Gastrocnemius medialis (tissue), 4 donors: ENCODE measurements at regions of chr1 and their contacts with region 1.

Region 1: GRCh38 chr1:173824331-173825081 is at the starts of genes CENPL and DARS2:
- DNase-seq: peak; percentile 95 to 96
- ATAC-seq: peak; percentile 99
- H3K4me3 ChIP-seq: peak within 1 kb of the TSS; percentile 69 to 94 (median 76)
- H3K27ac ChIP-seq: peak within 1 kb of the TSS; percentile 95 to 99 (median 96)
- H3K4me1 ChIP-seq: peaks cover 13% of the 10 kb centered on the region in 2 donors
- H3K27me3 ChIP-seq: no peaks in the 10 kb centered on the region
- CTCF ChIP-seq: no peak
- POLR2A ChIP-seq: peak; percentile 31 to 62
- total RNA-seq, gene CENPL: 1.1 to 5.0 (median 3.4) TPM
- total RNA-seq, gene DARS2: 4.3 to 8.9 (median 8.2) TPM

Region 2: GRCh38 chr1:172745014-172745413 is 1079.5 kb before region 1 on chr1:
- in situ Hi-C with region 1: loop called in 2 of 4 experiments (anchors 25 kb)
- intact Hi-C with region 1: no loop called
- DNase-seq: no peak
- ATAC-seq: peak; percentile 50 to 64
- H3K4me3 ChIP-seq: no peak overlapping the region
- H3K27ac ChIP-seq: peak overlapping the region in 3 of 4 donors; percentile 63 to 71 (median 68)
- H3K4me1 ChIP-seq: no peaks in the 10 kb centered on the region
- H3K27me3 ChIP-seq: no peaks in the 10 kb centered on the region
- CTCF ChIP-seq: peak in 3 of 5 experiments; percentile 34 to 43 (median 37)
- POLR2A ChIP-seq: no peak

Region 3: DNA sequence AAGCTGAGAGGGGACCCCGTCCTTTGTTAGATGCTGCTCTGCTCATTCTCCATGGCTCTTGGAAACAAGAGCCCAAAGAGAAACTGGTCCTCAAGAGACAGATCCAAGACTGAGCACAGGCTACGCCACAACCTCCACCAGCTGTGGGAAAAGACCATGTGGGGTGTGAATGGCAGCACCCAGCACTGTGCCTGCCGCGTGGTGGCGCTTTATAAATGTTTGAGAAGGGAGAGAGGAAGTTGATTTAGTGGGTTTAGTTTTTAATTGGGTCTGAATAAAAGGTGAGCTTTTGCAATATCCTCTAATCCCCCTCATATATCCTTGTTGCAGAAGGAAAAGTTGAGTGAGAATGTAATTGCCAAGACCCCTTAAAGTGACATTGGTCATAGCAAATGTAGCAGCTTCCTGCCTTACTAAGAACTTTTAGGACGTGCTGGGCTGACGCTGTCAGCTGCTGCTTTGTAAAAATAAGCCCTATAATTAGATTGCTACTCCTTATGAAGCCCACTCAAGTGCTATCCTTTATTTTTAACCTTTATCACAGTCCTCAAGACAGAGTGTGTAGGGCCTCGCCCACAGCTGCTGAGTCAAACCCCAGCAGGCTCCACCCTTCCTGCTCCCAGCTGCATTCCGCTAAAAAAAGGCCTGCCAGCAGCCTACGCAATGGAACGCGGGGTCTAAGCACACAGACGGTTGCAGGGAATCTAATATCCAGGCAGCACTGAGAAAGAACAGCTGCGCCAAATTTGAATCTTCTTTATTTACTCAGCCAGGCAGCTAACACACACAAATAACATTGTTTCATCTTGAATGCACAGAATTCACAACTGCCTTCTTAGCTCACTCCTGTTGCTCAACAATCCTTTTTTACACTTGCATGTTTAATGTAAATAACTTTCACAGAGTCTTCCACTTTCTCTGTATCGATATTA is 394.8 kb before region 1 on chr1:
- in situ Hi-C with region 1: loop called in 2 of 4 experiments (anchors 5 to 25 kb)
- intact Hi-C with region 1: loop called (anchors 2 kb)
- DNase-seq: peak; percentile 63 to 75
- ATAC-seq: peak; percentile 76 to 80
- H3K4me3 ChIP-seq: peak overlapping the region; percentile 10 to 46 (median 40)
- H3K27ac ChIP-seq: peak overlapping the region; percentile 76 to 83 (median 82)
- H3K4me1 ChIP-seq: peaks cover 28 to 29% of the 10 kb centered on the region in 2 donors
- H3K27me3 ChIP-seq: no peaks in the 10 kb centered on the region
- CTCF ChIP-seq: peak; percentile 9 to 72 (median 58)
- POLR2A ChIP-seq: peak; percentile 11 to 18

Region 4: DNA sequence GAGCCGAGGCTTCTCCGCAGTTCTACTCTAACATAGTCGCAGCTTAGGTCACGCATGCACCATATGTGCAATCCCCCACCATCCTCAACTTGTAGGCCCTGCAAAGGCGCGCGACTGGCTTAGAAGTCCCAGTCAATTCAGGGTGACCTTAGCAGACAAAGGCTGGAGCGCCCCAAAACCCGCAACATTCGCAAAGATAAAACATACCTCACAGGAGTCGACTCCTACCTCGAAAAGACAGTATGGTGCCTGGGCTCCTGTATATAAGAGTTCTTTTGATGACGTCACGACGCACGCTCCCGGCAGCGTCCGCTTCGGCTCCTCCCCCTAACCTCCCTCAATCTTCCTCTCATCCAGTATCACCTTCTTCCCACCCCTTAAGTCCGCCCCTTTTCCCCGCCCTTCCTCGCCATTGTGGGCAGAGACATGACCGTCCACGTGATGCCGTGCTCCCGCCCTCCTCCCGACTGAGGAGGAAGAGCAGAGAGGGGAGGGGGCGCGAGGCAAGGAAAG is 43.3 kb after region 1 on chr1 and contains the start of gene GAS5:
- in situ Hi-C with region 1: no loop called
- intact Hi-C with region 1: loop called (anchors 1 kb)
- DNase-seq: peak; percentile 99
- ATAC-seq: peak; percentile 93 to 97
- H3K4me3 ChIP-seq: peak within 1 kb of the TSS; percentile 63 to 97 (median 85)
- H3K27ac ChIP-seq: peak within 1 kb of the TSS; percentile 90 to 96 (median 95)
- H3K4me1 ChIP-seq: peaks cover 27 to 30% of the 10 kb centered on the region in 2 donors
- H3K27me3 ChIP-seq: no peaks in the 10 kb centered on the region
- CTCF ChIP-seq: peak in 1 of 5 experiments; percentile 13
- POLR2A ChIP-seq: peak; percentile 93 to 97
- total RNA-seq, gene GAS5: 91.9 to 138 (median 98.4) TPM

Region 5: GRCh38 chr1:174159252-174160108 is 335.0 kb after region 1 on chr1 and contains the start of gene RABGAP1L:
- in situ Hi-C with region 1: no loop called
- intact Hi-C with region 1: loop called (anchors 1 kb)
- DNase-seq: peak; percentile 88 to 90
- ATAC-seq: peak; percentile 94
- H3K4me3 ChIP-seq: peak within 1 kb of the TSS; percentile 90 to 100 (median 93)
- H3K27ac ChIP-seq: peak within 1 kb of the TSS; percentile 92 to 98 (median 94)
- H3K4me1 ChIP-seq: peaks cover 3 to 11% of the 10 kb centered on the region in 2 donors
- H3K27me3 ChIP-seq: no peaks in the 10 kb centered on the region
- CTCF ChIP-seq: peak in 2 of 5 experiments; percentile 9 to 17
- POLR2A ChIP-seq: peak; percentile 73 to 79
- total RNA-seq, gene RABGAP1L: 8.8 to 22.2 (median 14.9) TPM